Ovary (tissue), 10 donors: ENCODE measurements at regions of chr7 and their contacts with region 1.

Region 1: GRCh38 chr7:7182156-7183060 is at the start of gene C1GALT1:
- DNase-seq: peak; percentile 95 to 97 (median 97)
- H3K4me3 ChIP-seq: peak within 1 kb of the TSS; percentile 94
- H3K27ac ChIP-seq: peak within 1 kb of the TSS; percentile 75 to 90
- H3K4me1 ChIP-seq: peaks cover 4% of the 10 kb centered on the region
- H3K27me3 ChIP-seq: no peaks in the 10 kb centered on the region
- CTCF ChIP-seq: peak; percentile 39 to 69 (median 55)
- EP300 ChIP-seq: no peak
- POLR2A ChIP-seq: peak; percentile 64
- total RNA-seq, gene C1GALT1: 11.1 to 25.8 (median 14.9) TPM

Region 2: DNA sequence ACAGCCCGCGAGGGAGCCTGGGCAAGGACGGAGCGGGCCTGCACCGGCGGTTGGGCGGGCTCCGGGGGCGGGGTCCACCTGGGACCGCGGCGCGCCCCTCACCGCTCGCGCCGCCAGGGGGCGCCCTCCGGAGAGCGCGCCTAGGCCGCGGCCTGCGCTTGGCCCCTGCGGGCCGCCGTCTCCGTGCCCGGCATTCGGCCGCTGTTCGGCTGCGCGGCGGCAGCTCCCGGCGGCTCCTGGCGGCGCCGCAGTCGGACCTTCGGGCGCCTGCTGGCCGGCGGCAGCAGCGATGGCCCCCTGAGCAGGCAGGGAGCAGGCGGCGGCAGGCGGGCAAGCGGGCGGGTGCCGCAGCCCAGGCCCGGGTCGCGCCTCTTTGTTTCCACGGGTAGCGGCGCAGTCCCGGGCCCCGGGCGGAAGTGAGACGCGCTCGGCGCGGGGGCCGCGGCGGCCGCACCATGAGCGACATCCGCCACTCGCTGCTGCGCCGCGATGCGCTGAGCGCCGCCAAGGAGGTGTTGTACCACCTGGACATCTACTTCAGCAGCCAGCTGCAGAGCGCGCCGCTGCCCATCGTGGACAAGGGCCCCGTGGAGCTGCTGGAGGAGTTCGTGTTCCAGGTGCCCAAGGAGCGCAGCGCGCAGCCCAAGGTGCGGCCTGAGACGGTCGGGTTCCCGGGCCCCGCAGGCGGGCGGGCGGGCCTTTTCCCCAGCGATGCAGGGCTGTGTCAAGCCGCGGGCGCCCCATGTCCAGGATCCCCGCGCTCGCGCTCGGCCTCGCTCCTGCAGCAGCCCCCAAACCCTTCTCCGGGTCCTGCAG is 592.4 kb before region 1 on chr7 and contains the start of gene INTS15:
- intact Hi-C with region 1: loop called in 1 of 4 experiments (anchors 10 kb)
- DNase-seq: peak; percentile 74 to 89 (median 83)
- H3K4me3 ChIP-seq: peak within 1 kb of the TSS; percentile 80
- H3K27ac ChIP-seq: peak within 1 kb of the TSS; percentile 68 to 70
- H3K4me1 ChIP-seq: no peaks in the 10 kb centered on the region
- H3K27me3 ChIP-seq: no peaks in the 10 kb centered on the region
- CTCF ChIP-seq: peak; percentile 32 to 96 (median 93)
- EP300 ChIP-seq: no peak
- POLR2A ChIP-seq: peak; percentile 59
- total RNA-seq, gene INTS15: 20.3 to 35.0 (median 30.4) TPM

Region 3: GRCh38 chr7:7321720-7322128 is 139.3 kb after region 1 on chr7:
- intact Hi-C with region 1: no loop called
- DNase-seq: no peak
- H3K4me3 ChIP-seq: no peak overlapping the region
- H3K27ac ChIP-seq: no peak overlapping the region
- H3K4me1 ChIP-seq: no peaks in the 10 kb centered on the region
- H3K27me3 ChIP-seq: no peaks in the 10 kb centered on the region
- CTCF ChIP-seq: no peak
- EP300 ChIP-seq: no peak
- POLR2A ChIP-seq: no peak

Region 4: DNA sequence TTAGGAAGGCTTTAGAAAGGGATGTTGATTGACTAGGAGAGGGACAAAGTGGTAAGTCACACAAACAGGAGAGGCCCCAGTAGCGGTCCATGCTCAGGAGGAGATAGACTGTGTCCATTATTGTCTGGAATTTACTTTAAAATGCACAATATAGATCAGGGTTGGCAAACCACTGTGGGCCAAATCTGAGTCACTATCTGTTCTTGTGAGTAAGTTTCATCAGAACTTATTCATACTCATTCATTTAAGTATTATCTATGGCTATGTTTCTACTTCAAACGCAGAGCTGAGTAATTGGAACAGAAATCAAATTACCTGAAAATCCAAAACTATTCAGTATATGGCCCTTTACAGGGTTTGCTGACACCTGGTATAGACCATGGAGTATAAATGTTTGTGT is 186.7 kb after region 1 on chr7:
- intact Hi-C with region 1: no loop called
- DNase-seq: no peak
- H3K4me3 ChIP-seq: no peak overlapping the region
- H3K27ac ChIP-seq: no peak overlapping the region
- H3K4me1 ChIP-seq: no peaks in the 10 kb centered on the region
- H3K27me3 ChIP-seq: no peaks in the 10 kb centered on the region
- CTCF ChIP-seq: no peak
- EP300 ChIP-seq: no peak
- POLR2A ChIP-seq: no peak